HCT116 (cell line): ENCODE measurements at regions of chr3 and their contacts with region 1.

Region 1: GRCh38 chr3:11185564-11186317 is 31.4 kb downstream of the HRH1 start:
- DNase-seq: peak; percentile 83
- ATAC-seq: peak; percentile 82
- H3K4me3 ChIP-seq: peak overlapping the region; percentile 4 to 35; a peak in 2 of 4 replicates
- H3K27ac ChIP-seq: peak overlapping the region; percentile 55
- H3K4me1 ChIP-seq: peaks cover 32 to 58% of the 10 kb centered on the region in 2 experiments
- H3K27me3 ChIP-seq: no peaks in the 10 kb centered on the region
- CTCF ChIP-seq: no peak
- POLR2A ChIP-seq: no peak
- RAD21 ChIP-seq: peak; percentile 35; the same call in 1 of the 2 replicates

Region 2: DNA sequence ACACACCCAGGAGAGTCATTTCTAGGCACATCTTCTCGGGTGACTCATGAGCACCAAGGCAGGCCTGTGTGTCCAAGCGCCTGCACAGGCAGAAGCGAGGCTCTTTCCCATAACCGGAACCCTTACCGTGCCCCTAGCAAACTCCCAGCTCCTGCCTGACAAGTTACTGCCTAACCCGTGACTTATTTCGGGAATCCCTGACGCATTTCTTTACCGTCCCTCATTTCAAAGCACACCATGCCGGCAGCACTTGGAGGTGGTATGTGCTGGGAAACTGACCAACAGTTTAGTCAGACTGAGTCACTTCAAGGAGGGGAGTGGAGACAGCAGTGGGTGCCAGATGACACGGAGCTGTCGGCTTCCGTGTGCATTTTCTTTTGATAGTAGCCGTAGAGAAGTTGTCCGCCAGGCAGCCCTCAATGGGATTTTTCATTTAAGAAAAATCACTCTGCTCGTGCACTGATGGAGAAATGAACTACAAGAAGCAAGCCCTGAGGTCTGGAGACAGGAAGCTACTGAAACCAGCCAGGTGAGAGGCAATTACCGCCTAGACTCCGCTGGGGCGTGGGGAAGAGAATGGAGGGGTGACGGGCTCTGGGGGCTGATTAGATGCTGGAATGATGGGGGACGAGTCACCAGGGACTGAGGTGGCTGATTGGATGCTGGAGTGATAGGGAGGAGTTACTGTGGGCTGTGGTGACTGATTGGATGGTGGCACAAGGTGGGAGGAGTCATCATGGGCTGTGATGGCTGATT is 48.7 kb before region 1 on chr3:
- CTCF ChIA-PET with region 1: no interaction called
- POLR2A ChIA-PET with region 1: no interaction called
- RAD21 ChIA-PET with region 1: no interaction called
- intact Hi-C with region 1: loop called (anchors 1 kb)
- DNase-seq: peak; percentile 100
- ATAC-seq: peak; percentile 89
- H3K4me3 ChIP-seq: peak overlapping the region; percentile 55 to 59
- H3K27ac ChIP-seq: peak overlapping the region; percentile 93
- H3K4me1 ChIP-seq: peaks cover 37 to 60% of the 10 kb centered on the region in 2 experiments
- H3K27me3 ChIP-seq: no peaks in the 10 kb centered on the region
- CTCF ChIP-seq: no peak
- POLR2A ChIP-seq: peak; percentile 20
- RAD21 ChIP-seq: no peak

Region 3: DNA sequence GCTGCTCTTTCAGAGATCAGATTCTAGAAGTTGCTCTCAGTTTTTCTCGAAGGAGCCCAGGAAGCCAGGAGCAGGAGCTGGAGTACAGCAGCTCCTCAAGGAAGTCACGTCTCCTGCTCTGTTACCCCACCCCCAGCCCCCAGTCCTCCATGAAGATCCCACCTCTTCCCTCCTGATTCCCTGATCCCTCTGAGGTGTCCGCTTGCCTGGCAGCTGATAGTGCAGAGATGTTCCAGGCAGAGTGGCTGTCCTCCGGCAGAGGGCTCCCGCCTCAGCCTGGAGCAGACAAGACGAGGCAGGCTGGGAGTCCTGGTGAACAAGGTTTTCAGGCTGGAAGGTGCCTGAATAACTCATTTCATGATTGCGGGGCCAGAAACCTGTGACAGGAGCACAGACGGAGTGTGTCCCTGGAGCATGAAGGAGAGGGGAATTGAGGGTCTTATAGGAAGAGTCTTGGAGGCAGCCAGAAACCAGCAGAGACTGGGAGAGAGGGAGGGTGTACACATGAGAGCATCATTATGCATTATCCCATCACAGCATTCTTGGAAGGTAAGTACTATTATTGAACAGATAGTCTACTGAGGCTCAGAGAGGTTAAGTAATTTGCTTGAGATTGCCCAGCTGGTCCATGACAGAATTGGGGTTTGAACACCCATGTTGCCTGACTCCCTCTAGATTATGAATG is 30.3 kb before region 1 on chr3:
- CTCF ChIA-PET with region 1: interaction called, 3 read pairs
- POLR2A ChIA-PET with region 1: interaction called, 3 read pairs
- RAD21 ChIA-PET with region 1: no interaction called
- intact Hi-C with region 1: loop called (anchors 1 kb)
- DNase-seq: peak; percentile 47
- ATAC-seq: peak; percentile 90
- H3K4me3 ChIP-seq: peak overlapping the region; percentile 48 to 77
- H3K27ac ChIP-seq: no peak overlapping the region; the same call in 1 of the 2 replicates
- H3K4me1 ChIP-seq: peaks cover 10 to 37% of the 10 kb centered on the region in 2 experiments; a peak in 3 of 4 replicates
- H3K27me3 ChIP-seq: no peaks in the 10 kb centered on the region
- CTCF ChIP-seq: peak; percentile 81 to 89 (median 85)
- POLR2A ChIP-seq: no peak
- RAD21 ChIP-seq: peak; percentile 87